ENCODE measurements at regions of chr12 and their contacts with region 1.

Region 1: GRCh38 chr12:121872546-121873215 is 14.0 kb upstream of the HPD start:
- DNase-seq: no peak
- ATAC-seq: no peak
- H3K4me3 Mint-ChIP-seq: no peak overlapping the region
- H3K27ac Mint-ChIP-seq: peak overlapping the region in 1 of 10 donors; percentile 75
- H3K4me1 Mint-ChIP-seq: peaks cover 0 to 1% (median 0%) of the 10 kb centered on the region in 4 donors
- H3K27me3 Mint-ChIP-seq: no peaks in the 10 kb centered on the region

Region 2: DNA sequence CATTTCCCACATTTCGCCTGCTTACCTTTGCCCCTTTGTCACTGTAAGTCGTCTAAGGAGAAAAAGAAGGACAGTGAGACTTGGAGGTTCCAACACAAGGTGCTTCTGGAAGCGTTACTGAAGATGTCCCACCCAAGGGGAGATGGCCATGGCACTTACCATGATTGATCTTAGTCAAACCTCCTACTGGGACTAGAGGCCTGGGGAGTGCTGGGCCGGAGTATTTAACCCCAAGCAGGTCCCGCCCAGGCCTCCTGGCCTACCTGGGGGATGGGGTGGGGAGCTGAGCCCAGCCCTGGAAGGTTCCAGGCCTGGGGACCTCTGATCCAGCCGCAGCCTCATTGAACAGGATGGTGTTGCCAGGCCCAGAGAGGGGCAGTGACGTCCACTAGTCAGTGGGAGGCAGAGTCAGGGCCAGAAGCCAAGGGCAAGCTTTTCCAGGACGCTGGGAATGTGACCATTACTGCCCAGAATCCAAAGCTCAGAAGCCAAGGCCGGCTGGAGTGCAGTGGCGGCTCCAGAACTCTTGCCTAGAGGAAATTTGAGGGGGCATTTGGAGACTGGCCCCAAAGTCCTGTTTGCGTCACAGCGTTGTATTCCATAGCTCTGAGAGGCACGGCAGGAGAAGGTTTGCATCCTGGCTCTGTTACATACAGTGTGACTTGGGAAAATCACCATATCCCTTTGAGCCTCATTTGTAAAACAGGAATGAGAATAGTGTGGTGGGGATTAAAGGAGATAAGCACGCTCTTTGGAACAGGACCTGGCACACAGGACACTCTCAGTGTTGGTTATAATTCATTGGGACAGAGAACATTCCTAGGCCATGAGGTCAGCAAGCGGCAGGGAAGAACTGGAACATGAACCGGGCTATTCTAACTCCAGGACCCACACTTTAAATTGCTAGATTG is 13.8 kb before region 1 on chr12 and contains the start of gene HPD:
- POLR2A ChIA-PET with region 1: interaction called, 10 read pairs
- DNase-seq: no peak
- ATAC-seq: no peak
- H3K4me3 Mint-ChIP-seq: no peak within 1 kb of the TSS
- H3K27ac Mint-ChIP-seq: peak within 1 kb of the TSS in 1 of 10 donors; percentile 43
- H3K4me1 Mint-ChIP-seq: peaks cover 0 to 5% (median 0%) of the 10 kb centered on the region in 4 donors
- H3K27me3 Mint-ChIP-seq: no peaks in the 10 kb centered on the region
- polyA plus RNA-seq, gene HPD: not detected

Region 3: DNA sequence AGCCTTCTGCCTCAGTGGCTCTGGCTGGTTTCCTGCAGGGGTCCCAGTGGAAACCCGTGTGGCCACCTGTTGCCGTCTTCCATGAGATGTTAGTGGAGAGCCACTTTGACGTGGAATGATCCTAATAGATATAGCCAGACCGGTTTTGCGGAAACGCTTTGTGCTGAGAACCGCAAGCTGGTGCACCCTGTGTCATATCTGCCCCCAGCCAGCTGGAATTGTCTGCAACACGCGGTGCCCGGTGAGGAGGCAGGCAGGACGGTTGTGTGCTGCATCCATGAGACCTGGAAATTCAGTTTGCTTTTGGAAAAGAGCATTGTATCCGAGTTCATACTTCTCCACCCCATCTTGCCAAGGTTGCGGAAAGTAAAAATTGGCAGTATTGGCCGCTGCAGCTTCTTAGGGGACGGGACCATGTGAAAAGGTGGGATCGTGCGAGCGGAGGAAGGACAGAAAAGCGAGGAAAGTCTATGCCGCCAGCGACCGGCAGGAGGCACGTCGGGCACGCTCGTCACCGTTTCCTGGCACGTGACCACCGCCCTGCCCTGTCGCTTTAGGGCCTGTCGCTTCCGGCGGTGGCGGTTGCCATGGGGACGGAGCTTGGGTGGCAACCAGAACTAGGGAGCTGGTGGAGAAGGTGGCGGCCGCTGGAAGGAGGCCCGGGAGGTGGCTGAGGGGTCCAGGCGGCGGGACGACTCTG is 45.4 kb after region 1 on chr12 and contains the start of gene CFAP251:
- POLR2A ChIA-PET with region 1: no interaction called
- DNase-seq: peak; percentile 92 to 99 (median 94)
- ATAC-seq: peak; percentile 96 to 100
- H3K4me3 Mint-ChIP-seq: peak within 1 kb of the TSS; percentile 74 to 90 (median 84)
- H3K27ac Mint-ChIP-seq: peak within 1 kb of the TSS; percentile 83 to 98 (median 94)
- H3K4me1 Mint-ChIP-seq: peaks cover 3 to 16% (median 11%) of the 10 kb centered on the region in 4 donors
- H3K27me3 Mint-ChIP-seq: no peaks in the 10 kb centered on the region
- polyA plus RNA-seq, gene CFAP251: 0.03 to 0.06 TPM in 2 of 3 donors, not detected in the other

Measured in naive thymus-derived CD8-positive, alpha-beta T cell (primary cell).